Activated CD4-positive, alpha-beta memory T cell treated with anti-CD3 and anti-CD28 coated beads for 36 hours (primary cell): ENCODE measurements at regions of chr16 and their contacts with region 1.

Region 1: GRCh38 chr16:68528686-68529379 is 10.3 kb upstream of the ZFP90 start:
- DNase-seq: peak; percentile 93
- H3K4me3 Mint-ChIP-seq: peak overlapping the region; percentile 59
- H3K27ac Mint-ChIP-seq: peak overlapping the region; percentile 23
- H3K4me1 Mint-ChIP-seq: peaks cover 17% of the 10 kb centered on the region
- H3K27me3 Mint-ChIP-seq: peaks cover 1% of the 10 kb centered on the region

Region 2: DNA sequence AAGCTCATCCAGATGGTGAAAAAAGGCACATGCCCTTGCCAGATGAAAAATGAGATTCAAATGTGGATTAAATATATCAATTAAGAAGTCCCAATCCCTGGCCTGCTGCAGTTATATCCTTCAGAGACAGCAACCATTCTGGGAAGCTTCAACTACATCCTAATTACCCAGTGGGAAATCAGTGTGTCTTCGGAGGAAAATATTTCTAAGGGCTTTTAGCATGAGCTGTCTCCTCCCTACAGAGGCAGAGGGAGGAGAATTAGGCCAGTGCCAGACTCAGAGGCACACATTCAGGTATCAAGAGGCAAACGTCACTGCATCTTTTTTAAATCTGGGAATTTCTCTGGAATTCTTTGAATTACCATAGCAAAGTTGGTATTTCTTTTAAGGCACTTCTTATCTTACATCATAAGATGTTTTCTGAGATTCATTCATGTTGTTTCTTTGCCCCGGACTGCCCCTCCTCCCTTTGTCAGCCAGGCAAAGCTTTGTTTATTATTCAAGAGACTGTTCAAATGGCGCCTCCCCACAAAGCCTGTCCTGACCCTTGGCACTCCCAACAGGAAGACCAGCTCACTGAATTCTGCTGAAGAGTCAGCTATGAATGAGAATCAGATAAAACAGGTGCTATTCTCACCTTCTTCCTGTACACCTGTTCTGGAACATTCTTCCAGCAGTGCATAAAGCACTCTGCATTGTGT is 42.2 kb before region 1 on chr16:
- CTCF ChIA-PET with region 1: no interaction called
- POLR2A ChIA-PET with region 1: no interaction called
- intact Hi-C with region 1: no loop called
- DNase-seq: no peak
- H3K4me3 Mint-ChIP-seq: no peak overlapping the region
- H3K27ac Mint-ChIP-seq: no peak overlapping the region
- H3K4me1 Mint-ChIP-seq: no peaks in the 10 kb centered on the region
- H3K27me3 Mint-ChIP-seq: no peaks in the 10 kb centered on the region

Region 3: DNA sequence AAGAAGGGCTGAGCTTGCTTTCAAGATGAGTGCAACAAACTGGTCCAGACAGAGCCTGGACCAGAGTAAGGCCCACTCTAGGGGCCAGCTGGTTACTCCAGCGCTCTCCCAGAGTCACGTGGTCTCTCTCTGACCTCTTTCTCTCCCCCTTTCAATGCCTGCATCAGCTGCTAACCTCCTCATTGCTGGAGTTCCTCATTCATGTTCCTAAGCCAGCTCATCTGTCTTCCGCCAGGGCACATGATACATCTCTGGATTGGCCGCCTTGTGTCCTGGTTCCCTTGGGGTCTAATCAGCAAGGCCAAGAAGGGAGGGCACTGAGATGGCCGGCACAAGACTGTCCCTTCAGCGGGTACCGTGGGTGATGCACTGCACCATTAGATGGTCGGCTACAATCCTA is 16.6 kb before region 1 on chr16:
- CTCF ChIA-PET with region 1: interaction called, 19 read pairs
- POLR2A ChIA-PET with region 1: no interaction called
- intact Hi-C with region 1: no loop called
- DNase-seq: no peak
- H3K4me3 Mint-ChIP-seq: no peak overlapping the region
- H3K27ac Mint-ChIP-seq: no peak overlapping the region
- H3K4me1 Mint-ChIP-seq: no peaks in the 10 kb centered on the region
- H3K27me3 Mint-ChIP-seq: peaks cover 3% of the 10 kb centered on the region

Region 4: DNA sequence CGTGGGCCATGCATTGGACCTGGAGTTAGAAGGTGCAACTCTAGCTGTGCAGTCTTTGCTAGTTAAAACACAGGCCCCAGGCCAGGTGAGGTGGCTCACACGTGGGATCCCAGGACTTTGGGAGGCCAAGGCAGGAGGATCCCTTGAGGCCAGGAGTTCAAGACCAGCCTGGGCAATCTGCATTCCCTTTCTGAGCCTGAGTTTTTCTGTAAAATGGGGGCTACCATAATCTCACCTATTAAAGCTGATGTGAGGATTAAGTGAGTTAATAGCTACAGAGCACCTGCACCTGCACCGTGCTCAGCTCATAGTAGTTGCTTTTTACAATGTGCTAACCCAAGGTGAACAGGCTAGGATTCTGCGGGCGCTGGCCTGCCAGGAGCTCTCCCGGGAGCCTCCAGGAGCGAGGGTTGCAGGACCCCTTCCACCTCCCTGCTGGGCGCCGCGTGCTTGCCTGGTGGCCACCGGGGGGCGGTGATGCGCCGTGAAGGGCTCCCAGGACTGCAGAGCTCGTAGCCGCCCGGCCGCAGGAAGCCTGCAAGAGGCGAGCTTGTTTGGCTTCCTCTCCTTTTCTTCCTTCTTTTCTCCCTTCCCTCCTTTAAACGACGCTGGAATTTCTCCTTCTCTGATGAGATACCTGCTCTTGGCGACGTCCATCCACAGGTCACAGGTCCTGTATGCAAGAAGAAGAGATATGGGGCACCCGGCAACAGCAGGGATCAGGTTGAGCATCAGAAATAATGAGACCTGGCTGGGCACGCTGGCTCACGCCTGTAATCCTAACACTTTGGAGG is 61.6 kb after region 1 on chr16:
- CTCF ChIA-PET with region 1: interaction called, 74 read pairs
- POLR2A ChIA-PET with region 1: no interaction called
- intact Hi-C with region 1: loop called (anchors 2 kb)
- DNase-seq: peak; percentile 83
- H3K4me3 Mint-ChIP-seq: no peak overlapping the region
- H3K27ac Mint-ChIP-seq: no peak overlapping the region
- H3K4me1 Mint-ChIP-seq: peaks cover 2% of the 10 kb centered on the region
- H3K27me3 Mint-ChIP-seq: peaks cover 1% of the 10 kb centered on the region

Region 5: DNA sequence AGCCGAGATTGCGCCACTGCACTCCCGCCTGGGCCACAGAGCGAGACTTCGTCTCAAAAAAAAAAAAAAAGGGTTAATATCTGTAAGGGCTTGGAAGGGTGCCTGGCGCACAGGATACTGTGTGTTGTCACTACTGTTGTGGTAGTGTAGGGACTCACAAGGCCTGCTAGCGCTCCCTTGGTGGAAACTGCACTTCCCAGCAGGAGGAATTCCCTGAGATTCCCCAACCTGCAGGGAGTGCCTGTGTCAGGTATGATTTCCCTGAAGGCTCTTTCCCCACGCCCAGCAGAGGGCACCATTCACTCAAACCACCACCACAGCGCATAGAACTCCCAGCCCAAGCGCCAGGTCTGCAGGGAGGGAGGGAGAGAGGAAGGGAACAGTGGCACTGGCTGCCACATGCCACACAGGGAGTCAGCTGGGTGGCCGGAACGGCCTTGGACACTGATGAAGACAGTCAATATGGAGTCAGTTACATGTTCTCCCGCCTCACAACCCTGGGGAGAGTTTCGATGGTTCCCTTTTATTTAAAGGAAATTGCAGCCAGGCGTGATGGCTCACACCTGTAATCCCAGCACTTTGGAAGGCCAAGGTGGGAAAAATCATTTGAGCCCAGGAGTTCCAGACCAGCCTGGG is 175.5 kb after region 1 on chr16:
- CTCF ChIA-PET with region 1: interaction called, 3 read pairs
- POLR2A ChIA-PET with region 1: no interaction called
- intact Hi-C with region 1: loop called (anchors 2 kb)
- DNase-seq: peak; percentile 82
- H3K4me3 Mint-ChIP-seq: no peak overlapping the region
- H3K27ac Mint-ChIP-seq: no peak overlapping the region
- H3K4me1 Mint-ChIP-seq: peaks cover 11% of the 10 kb centered on the region
- H3K27me3 Mint-ChIP-seq: peaks cover 3% of the 10 kb centered on the region

Region 6: DNA sequence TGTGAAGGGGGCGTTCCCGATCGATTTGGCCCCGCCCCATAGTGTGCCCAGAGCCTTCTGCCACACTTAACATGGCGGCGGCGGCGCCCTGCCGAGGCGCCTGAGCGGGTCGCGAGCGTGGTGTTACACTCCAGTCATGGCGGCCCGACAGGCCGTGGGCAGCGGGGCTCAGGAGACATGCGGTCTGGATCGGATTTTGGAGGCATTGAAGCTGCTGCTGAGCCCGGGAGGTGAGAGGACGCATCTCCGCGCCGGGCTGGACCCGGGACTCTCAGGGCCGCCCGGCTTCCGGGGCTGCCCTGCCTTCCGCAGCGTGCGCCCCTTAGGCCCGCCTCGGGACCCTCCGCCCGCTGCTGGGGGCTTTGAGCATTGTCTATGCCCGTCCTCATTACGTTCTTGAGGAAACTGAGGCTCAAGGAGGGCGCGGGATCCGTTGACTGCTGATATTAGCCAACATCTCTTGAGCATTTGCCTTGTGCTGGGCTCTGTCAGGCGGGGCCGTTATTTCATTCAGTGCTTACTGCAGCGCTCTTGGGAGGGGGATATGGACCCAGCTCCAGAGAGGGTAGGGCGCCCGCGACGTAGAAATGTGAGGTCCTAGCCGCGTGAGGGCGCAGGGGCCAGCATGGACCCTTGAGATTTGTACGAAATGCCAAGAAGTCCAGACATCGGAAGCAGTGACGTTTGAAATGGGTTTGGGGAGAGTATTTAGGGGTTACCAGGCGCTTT is 314.8 kb after region 1 on chr16 and contains the start of gene TANGO6:
- CTCF ChIA-PET with region 1: interaction called, 26 read pairs
- POLR2A ChIA-PET with region 1: no interaction called
- intact Hi-C with region 1: loop called (anchors 1 kb)
- DNase-seq: peak; percentile 96
- H3K4me3 Mint-ChIP-seq: peak within 1 kb of the TSS; percentile 95
- H3K27ac Mint-ChIP-seq: peak within 1 kb of the TSS; percentile 85
- H3K4me1 Mint-ChIP-seq: peaks cover 25% of the 10 kb centered on the region
- H3K27me3 Mint-ChIP-seq: no peaks in the 10 kb centered on the region
- total RNA-seq, gene TANGO6: 25.2 to 25.7 TPM

Region 7: DNA sequence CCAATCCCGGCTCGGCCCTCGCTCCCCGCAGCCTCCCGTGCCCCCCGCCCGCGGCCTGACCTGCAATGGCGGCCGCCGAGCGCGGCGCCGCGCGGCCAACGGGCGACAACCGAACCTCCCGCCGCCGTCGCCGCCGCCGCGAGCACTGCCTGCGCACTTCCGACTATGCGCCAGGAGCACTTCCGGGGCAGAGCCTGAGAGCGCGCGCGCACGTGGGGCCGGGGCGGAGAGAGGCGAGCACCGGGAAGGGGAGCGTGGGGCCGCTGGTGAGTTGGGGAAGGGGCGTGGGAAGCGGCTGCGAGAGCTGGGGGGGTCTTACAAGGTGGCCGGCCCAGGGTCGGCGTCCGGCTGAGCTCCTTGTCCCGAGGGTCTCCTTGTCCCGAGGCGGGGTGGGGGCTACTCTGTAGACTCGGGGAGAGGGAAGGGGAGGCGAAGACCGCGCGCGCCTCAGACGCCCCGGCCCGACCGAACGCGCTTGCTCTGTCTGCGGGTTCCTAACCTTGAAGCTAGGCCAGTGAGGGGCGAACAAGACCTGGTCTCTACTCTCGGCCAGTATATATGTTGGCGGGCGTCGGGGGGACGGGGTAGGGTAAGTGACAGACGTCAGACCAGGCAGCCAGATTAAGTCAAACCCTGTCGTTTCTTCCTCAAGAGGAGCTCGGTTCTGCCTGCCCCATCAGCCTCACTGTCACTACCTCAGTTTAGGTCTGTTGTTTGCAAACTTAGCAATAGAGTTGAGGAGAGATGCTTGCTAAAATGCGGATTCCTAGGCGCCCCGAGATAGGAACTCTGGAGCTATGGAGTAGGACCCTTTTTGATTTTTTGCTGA is 603.8 kb after region 1 on chr16 and contains the starts of genes CHTF8 and UTP4:
- CTCF ChIA-PET with region 1: interaction called, 3 read pairs
- POLR2A ChIA-PET with region 1: no interaction called
- intact Hi-C with region 1: loop called (anchors 5 kb)
- DNase-seq: peak; percentile 91
- H3K4me3 Mint-ChIP-seq: peak within 1 kb of the TSS; percentile 97
- H3K27ac Mint-ChIP-seq: peak within 1 kb of the TSS; percentile 91
- H3K4me1 Mint-ChIP-seq: peaks cover 64% of the 10 kb centered on the region
- H3K27me3 Mint-ChIP-seq: no peaks in the 10 kb centered on the region
- total RNA-seq, gene CHTF8: 120 to 132 TPM
- total RNA-seq, gene UTP4: 104 to 106 TPM